ENCODE measurements at regions of chr13 and their contacts with region 1.

Region 1: GRCh38 chr13:75934889-75935288 is 298.8 kb downstream of the LMO7 start:
- DNase-seq: no peak
- H3K4me3 ChIP-seq: no peak overlapping the region
- H3K27ac ChIP-seq: no peak overlapping the region
- H3K4me1 ChIP-seq: peaks cover 3% of the 10 kb centered on the region
- H3K27me3 ChIP-seq: no peaks in the 10 kb centered on the region
- CTCF ChIP-seq: no peak
- POLR2A ChIP-seq: no peak

Region 2: GRCh38 chr13:74778946-74779345 is 1155.9 kb before region 1 on chr13:
- intact Hi-C with region 1: loop called (anchors 5 kb)
- DNase-seq: no peak
- H3K4me3 ChIP-seq: no peak overlapping the region
- H3K27ac ChIP-seq: no peak overlapping the region
- H3K4me1 ChIP-seq: no peaks in the 10 kb centered on the region
- H3K27me3 ChIP-seq: no peaks in the 10 kb centered on the region
- CTCF ChIP-seq: no peak
- POLR2A ChIP-seq: no peak

Region 3: DNA sequence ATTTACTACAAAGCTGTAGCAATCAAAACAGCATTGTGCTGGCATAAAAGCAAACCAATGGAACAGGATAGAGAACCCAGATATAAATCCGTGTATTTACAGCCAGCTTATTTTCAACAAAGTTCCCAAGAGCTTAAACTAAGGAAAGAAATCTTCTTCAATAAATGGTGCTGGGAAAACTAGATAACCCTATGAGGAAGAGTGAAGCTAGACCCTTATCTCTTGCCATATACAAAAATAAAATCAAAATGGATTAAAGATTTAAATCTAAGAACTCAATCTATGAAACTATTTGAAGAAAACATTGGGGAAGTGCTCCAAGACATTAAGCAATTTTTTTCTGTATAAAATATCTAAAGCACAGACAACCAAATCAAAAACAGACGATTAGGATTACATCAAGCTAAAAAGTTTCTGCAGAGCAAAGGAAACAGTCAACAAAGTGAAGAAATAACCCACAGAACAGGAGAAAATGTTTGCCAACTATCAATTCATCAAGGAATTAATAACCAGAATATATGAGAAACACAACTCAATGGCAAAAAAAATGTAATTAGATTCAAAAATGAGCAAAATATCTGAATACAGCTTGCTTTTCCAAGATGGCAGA is 182.0 kb after region 1 on chr13:
- intact Hi-C with region 1: no loop called
- DNase-seq: no peak
- H3K4me3 ChIP-seq: no peak overlapping the region
- H3K27ac ChIP-seq: no peak overlapping the region
- H3K4me1 ChIP-seq: no peaks in the 10 kb centered on the region
- H3K27me3 ChIP-seq: no peaks in the 10 kb centered on the region
- CTCF ChIP-seq: no peak
- POLR2A ChIP-seq: no peak